ENCODE measurements at regions of chr10 and their contacts with region 1.

Region 1: DNA sequence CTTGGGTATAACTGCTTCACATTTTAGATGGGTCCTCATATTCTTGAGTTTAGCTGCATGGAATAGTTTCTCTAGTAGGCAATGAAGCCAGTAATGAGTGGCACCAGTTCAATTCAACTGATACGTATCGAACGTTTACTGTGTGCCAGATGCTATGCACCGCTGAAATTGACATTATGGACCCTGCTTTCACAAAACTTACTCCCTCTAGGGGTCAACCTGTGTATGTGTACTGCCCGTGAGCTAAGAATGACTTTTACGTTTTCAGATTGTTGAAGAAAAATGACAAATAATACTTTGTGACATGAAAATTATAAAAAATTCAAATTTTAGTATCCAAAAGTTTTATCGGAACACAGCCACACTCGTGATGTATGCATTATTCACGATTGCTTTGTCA is 95.5 kb downstream of the ZMYND11 start:
- DNase-seq: no peak
- ATAC-seq: peak; percentile 79
- H3K4me3 Mint-ChIP-seq: no peak overlapping the region
- H3K27ac Mint-ChIP-seq: no peak overlapping the region
- H3K4me1 Mint-ChIP-seq: 0 out of 2 replicates have a peak, but pooled peaks cover 7% of the 10 kb centered on the region
- H3K27me3 Mint-ChIP-seq: no peaks in the 10 kb centered on the region
- CTCF ChIP-seq: peak; percentile 55

Region 2: GRCh38 chr10:218798-219197 is 11.9 kb before region 1 on chr10:
- CTCF ChIA-PET with region 1: interaction called, 35 read pairs
- POLR2A ChIA-PET with region 1: no interaction called
- DNase-seq: no peak
- ATAC-seq: no peak
- H3K4me3 Mint-ChIP-seq: no peak overlapping the region
- H3K27ac Mint-ChIP-seq: no peak overlapping the region
- H3K4me1 Mint-ChIP-seq: no peaks in the 10 kb centered on the region
- H3K27me3 Mint-ChIP-seq: no peaks in the 10 kb centered on the region
- CTCF ChIP-seq: no peak

Region 3: GRCh38 chr10:241451-241850 is 10.7 kb after region 1 on chr10:
- CTCF ChIA-PET with region 1: interaction called, 13 read pairs
- POLR2A ChIA-PET with region 1: no interaction called
- DNase-seq: no peak
- ATAC-seq: no peak
- H3K4me3 Mint-ChIP-seq: no peak overlapping the region
- H3K27ac Mint-ChIP-seq: no peak overlapping the region
- H3K4me1 Mint-ChIP-seq: peaks cover 7% of the 10 kb centered on the region; the same call in 1 of the 2 replicates
- H3K27me3 Mint-ChIP-seq: no peaks in the 10 kb centered on the region
- CTCF ChIP-seq: no peak